G401 (cell line): ENCODE measurements at regions of chr3 and their contacts with region 1.

Region 1: GRCh38 chr3:138732456-138732855 is 102.3 kb downstream of the PIK3CB start:
- DNase-seq: no peak

Region 2: DNA sequence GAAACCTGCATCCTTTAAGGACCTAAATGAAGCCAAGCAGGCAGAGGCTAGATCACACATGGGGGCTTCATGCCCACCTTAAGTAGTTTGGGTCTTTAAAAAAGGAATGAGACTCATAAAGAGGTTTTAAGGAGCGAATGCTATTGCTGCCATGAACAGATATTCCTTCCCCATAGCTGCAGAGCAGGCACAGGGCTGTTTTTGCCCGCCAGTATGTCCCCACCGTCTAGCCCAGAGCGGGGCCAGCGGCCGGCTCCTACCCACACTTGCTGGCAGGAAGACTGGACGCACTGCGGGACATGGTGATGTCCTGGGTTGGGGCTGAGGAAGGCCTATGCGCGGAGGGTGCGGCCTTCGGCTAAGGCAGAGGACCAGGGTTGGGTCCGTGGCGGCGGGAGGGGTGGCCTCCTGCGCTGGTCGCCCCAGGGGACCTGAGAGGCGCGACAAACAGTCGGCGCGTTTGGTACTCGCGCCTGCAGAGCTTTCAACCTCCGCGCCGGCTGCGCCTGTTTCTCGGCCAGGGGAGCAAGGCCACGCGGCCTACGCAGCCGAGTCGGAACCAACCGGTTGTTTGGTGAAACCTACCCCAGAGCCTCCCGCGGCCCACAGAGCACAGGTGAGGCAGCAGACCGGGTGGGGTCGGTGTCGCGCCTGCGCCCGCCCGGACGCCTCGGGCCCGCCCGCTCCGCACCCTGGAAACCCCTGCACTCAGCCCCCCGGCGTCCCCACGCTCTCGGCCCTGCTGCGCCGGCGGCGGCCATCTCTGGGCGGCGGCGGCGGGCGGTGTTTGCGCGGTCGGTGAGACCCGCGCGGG is 123.9 kb before region 1 on chr3 and contains the start of gene FAIM:
- in situ Hi-C with region 1: no loop called
- DNase-seq: peak; percentile 74
- total RNA-seq, gene FAIM: 23.8 and 26.2 TPM in 2 replicates

Region 3: DNA sequence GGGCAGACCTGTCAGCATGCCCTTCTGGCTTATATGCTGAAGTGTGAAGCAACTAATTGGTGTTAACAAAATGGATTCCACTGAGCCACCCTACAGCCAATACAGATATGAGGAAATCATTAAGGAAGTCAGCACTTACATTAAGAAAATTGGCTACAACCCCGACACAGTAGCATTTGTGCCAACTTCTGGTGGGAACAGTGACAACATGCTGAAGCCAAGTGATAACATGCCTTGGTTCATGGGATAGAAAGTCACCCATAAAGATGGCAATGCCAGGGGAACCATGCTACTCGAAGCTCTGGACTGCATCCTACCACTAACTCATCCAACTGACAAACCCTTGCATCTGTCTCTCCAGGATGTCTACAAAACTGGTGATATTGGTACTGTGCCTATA is 92.9 kb after region 1 on chr3:
- in situ Hi-C with region 1: loop called (anchors 5 kb)
- DNase-seq: no peak